Activated CD8-positive, alpha-beta T cell treated with anti-CD3 and anti-CD28 coated beads, Interleukin-2, amount 10 ng/mL, durations not matched to agents 7 days and 5 days (primary cell): ENCODE measurements at regions of chr17 and their contacts with region 1.

Region 1: DNA sequence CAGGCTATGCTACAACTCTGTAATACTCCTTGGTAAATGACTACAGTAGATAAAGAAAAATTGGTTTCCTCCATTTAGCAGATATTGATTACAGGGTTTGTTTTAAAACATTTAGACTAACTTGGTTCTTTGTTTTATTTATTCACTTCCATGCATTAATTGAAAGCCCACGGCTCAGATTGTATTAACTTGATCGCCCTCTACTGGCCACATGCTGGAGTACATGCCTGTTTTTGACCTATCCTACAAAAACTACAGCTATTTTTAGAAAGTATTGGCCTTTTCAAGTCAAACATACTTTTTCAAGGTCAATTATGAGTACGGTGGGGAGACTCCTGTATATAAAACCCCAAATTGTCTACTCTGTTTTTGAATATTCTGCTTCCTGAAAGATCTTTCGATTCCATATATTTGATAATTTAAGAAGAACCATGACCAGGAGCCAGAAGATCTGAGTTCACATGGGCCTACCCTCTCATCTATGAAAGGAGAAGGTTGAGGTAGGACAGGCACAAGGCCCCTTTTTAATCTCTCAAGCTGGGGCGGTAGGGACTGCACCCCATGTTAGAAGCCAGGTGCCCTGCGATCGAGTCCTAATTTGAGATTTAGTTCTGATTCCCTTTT is 51.8 kb downstream of the CA10 start:
- DNase-seq: peak; percentile 49
- ATAC-seq: no peak
- H3K4me3 Mint-ChIP-seq: no peak overlapping the region
- H3K27ac Mint-ChIP-seq: no peak overlapping the region
- H3K4me1 Mint-ChIP-seq: no peaks in the 10 kb centered on the region
- H3K27me3 Mint-ChIP-seq: no peaks in the 10 kb centered on the region

Region 2: GRCh38 chr17:51764387-51764972 is 342.3 kb before region 1 on chr17:
- CTCF ChIA-PET with region 1: interaction called, 21 read pairs
- POLR2A ChIA-PET with region 1: no interaction called
- DNase-seq: peak; percentile 55
- ATAC-seq: peak; percentile 76
- H3K4me3 Mint-ChIP-seq: no peak overlapping the region
- H3K27ac Mint-ChIP-seq: no peak overlapping the region
- H3K4me1 Mint-ChIP-seq: no peaks in the 10 kb centered on the region
- H3K27me3 Mint-ChIP-seq: peaks cover 4% of the 10 kb centered on the region

Region 3: GRCh38 chr17:51995797-51996403 is 110.8 kb before region 1 on chr17:
- CTCF ChIA-PET with region 1: no interaction called
- POLR2A ChIA-PET with region 1: no interaction called
- DNase-seq: no peak
- ATAC-seq: no peak
- H3K4me3 Mint-ChIP-seq: no peak overlapping the region
- H3K27ac Mint-ChIP-seq: no peak overlapping the region
- H3K4me1 Mint-ChIP-seq: no peaks in the 10 kb centered on the region
- H3K27me3 Mint-ChIP-seq: no peaks in the 10 kb centered on the region